BJ (cell line): ENCODE measurements at regions of chr16 and their contacts with region 1.

Region 1: GRCh38 chr16:69754469-69755310 is at the start of gene NOB1:
- DNase-seq: peak; percentile 77
- H3K4me3 ChIP-seq: peak within 1 kb of the TSS; percentile 65
- H3K27me3 ChIP-seq: no peaks in the 10 kb centered on the region
- CTCF ChIP-seq: peak; percentile 100
- polyA plus RNA-seq, gene NOB1: 64.3 and 73.1 TPM in 2 replicates

Region 2: GRCh38 chr16:69396187-69397061 is 358.3 kb before region 1 on chr16:
- CTCF ChIA-PET with region 1: interaction called, 53 read pairs
- POLR2A ChIA-PET with region 1: interaction called, 5 read pairs
- DNase-seq: peak; percentile 74
- H3K4me3 ChIP-seq: no peak overlapping the region
- H3K27me3 ChIP-seq: no peaks in the 10 kb centered on the region
- CTCF ChIP-seq: peak; percentile 59

Region 3: GRCh38 chr16:69709456-69710084 is 45.1 kb before region 1 on chr16:
- CTCF ChIA-PET with region 1: interaction called, 29 read pairs
- POLR2A ChIA-PET with region 1: no interaction called
- DNase-seq: peak; percentile 25
- H3K4me3 ChIP-seq: no peak overlapping the region
- H3K27me3 ChIP-seq: no peaks in the 10 kb centered on the region
- CTCF ChIP-seq: peak; percentile 53

Region 4: GRCh38 chr16:69724981-69725479 is 29.7 kb before region 1 on chr16:
- CTCF ChIA-PET with region 1: interaction called, 14 read pairs
- POLR2A ChIA-PET with region 1: no interaction called
- DNase-seq: no peak
- H3K4me3 ChIP-seq: peak overlapping the region; percentile 51
- H3K27me3 ChIP-seq: no peaks in the 10 kb centered on the region
- CTCF ChIP-seq: no peak

Region 5: GRCh38 chr16:69741919-69742904 is 12.5 kb before region 1 on chr16:
- CTCF ChIA-PET with region 1: interaction called, 11 read pairs
- POLR2A ChIA-PET with region 1: no interaction called
- DNase-seq: no peak
- H3K4me3 ChIP-seq: no peak overlapping the region
- H3K27me3 ChIP-seq: no peaks in the 10 kb centered on the region
- CTCF ChIP-seq: no peak

Region 6: GRCh38 chr16:69804297-69804696 is 49.6 kb after region 1 on chr16:
- CTCF ChIA-PET with region 1: no interaction called
- POLR2A ChIA-PET with region 1: no interaction called
- DNase-seq: no peak
- H3K4me3 ChIP-seq: no peak overlapping the region
- H3K27me3 ChIP-seq: no peaks in the 10 kb centered on the region
- CTCF ChIP-seq: no peak

Region 7: DNA sequence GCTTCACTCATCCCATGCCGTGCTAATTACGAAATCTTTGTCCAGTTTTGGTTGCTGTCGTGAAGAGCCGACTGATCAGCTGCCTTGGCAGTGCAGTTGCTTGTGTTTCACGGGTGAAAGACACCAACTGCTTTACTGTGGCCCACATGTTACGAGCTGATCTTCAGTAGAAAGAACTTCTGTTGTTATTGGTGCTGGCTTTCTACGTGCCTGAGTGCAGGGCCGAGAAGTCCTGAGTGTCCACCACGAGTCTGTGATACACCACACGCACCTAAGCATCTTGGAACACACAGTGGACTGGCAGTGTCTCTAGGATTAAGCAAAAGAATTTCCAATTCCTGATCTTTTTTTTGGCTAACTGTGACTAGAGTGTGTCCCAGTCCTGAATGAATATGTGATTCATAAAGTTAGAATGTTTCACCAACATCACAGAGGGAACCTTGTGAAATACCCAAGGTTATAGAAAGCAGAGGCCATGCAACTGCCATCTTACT is 126.0 kb after region 1 on chr16:
- CTCF ChIA-PET with region 1: no interaction called
- POLR2A ChIA-PET with region 1: no interaction called
- DNase-seq: no peak
- H3K4me3 ChIP-seq: no peak overlapping the region
- H3K27me3 ChIP-seq: no peaks in the 10 kb centered on the region
- CTCF ChIP-seq: no peak